Esophagus muscularis mucosa (tissue), 4 donors: ENCODE measurements at regions of chr3 and their contacts with region 1.

Region 1: GRCh38 chr3:184250167-184250828 is 826 bp downstream of the EEF1AKMT4 start:
- DNase-seq: peak; percentile 96
- H3K4me3 ChIP-seq: peak overlapping the region; percentile 77 to 93 (median 86)
- H3K27ac ChIP-seq: peak overlapping the region; percentile 74 to 84 (median 81)
- H3K4me1 ChIP-seq: peaks cover 14 to 35% (median 23%) of the 10 kb centered on the region in 4 donors
- H3K27me3 ChIP-seq: no peaks in the 10 kb centered on the region
- CTCF ChIP-seq: peak; percentile 87 to 98 (median 91)
- EP300 ChIP-seq: no peak
- POLR2A ChIP-seq: no peak

Region 2: DNA sequence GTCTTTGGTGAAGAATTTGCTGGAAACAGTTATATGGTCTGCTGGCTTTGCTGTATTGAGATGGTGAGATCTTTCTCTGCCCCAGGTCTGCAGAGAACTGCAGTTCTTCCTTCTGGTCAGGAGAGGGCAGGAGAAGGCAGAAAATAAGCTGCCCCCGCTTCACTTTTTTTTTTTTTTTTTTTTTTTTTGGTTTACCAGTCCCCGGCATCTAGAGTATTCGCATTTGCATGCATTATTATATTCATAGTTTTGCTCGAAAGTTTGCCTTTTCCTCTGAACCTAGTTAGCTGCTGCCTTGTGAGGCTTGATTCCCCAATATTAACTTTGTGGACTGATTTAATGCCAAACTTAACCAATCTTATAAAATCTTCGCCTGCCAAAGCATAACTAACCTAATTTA is 355.0 kb before region 1 on chr3:
- intact Hi-C with region 1: loop called (anchors 10 kb)
- DNase-seq: no peak
- H3K4me3 ChIP-seq: no peak overlapping the region
- H3K27ac ChIP-seq: no peak overlapping the region
- H3K4me1 ChIP-seq: peaks cover 0 to 4% (median 4%) of the 10 kb centered on the region in 4 donors
- H3K27me3 ChIP-seq: peaks cover 0 to 45% (median 0%) of the 10 kb centered on the region in 4 donors
- CTCF ChIP-seq: peak; percentile 74 to 82 (median 77)
- EP300 ChIP-seq: no peak
- POLR2A ChIP-seq: no peak

Region 3: GRCh38 chr3:184017672-184018423 is 232.4 kb before region 1 on chr3 and contains the start of gene ABCC5:
- intact Hi-C with region 1: loop called (anchors 5 kb)
- DNase-seq: peak; percentile 97
- H3K4me3 ChIP-seq: peak within 1 kb of the TSS; percentile 87 to 99 (median 93)
- H3K27ac ChIP-seq: peak within 1 kb of the TSS; percentile 80 to 84 (median 84)
- H3K4me1 ChIP-seq: peaks cover 3 to 25% (median 21%) of the 10 kb centered on the region in 4 donors
- H3K27me3 ChIP-seq: no peaks in the 10 kb centered on the region
- CTCF ChIP-seq: peak in 2 of 3 experiments; percentile 24 to 55
- EP300 ChIP-seq: no peak
- POLR2A ChIP-seq: no peak
- total RNA-seq, gene ABCC5: 9.8 to 20.2 (median 17.6) TPM

Region 4: GRCh38 chr3:184145111-184145524 is 105.2 kb before region 1 on chr3:
- intact Hi-C with region 1: loop called (anchors 5 kb)
- DNase-seq: no peak
- H3K4me3 ChIP-seq: no peak overlapping the region
- H3K27ac ChIP-seq: peak overlapping the region in 1 of 4 donors; percentile 22
- H3K4me1 ChIP-seq: peaks cover 4 to 11% (median 8%) of the 10 kb centered on the region in 4 donors
- H3K27me3 ChIP-seq: no peaks in the 10 kb centered on the region
- CTCF ChIP-seq: peak; percentile 43 to 53 (median 47)
- EP300 ChIP-seq: no peak
- POLR2A ChIP-seq: no peak

Region 5: GRCh38 chr3:184399410-184399809 is 149.1 kb after region 1 on chr3:
- intact Hi-C with region 1: no loop called
- DNase-seq: no peak
- H3K4me3 ChIP-seq: no peak overlapping the region
- H3K27ac ChIP-seq: peak overlapping the region in 1 of 4 donors; percentile 6
- H3K4me1 ChIP-seq: no peaks in the 10 kb centered on the region
- H3K27me3 ChIP-seq: peaks cover 0 to 22% (median 3%) of the 10 kb centered on the region in 4 donors
- CTCF ChIP-seq: no peak
- EP300 ChIP-seq: no peak
- POLR2A ChIP-seq: no peak